OCI-LY7 (cell line): ENCODE measurements at regions of chr7 and their contacts with region 1.

Region 1: DNA sequence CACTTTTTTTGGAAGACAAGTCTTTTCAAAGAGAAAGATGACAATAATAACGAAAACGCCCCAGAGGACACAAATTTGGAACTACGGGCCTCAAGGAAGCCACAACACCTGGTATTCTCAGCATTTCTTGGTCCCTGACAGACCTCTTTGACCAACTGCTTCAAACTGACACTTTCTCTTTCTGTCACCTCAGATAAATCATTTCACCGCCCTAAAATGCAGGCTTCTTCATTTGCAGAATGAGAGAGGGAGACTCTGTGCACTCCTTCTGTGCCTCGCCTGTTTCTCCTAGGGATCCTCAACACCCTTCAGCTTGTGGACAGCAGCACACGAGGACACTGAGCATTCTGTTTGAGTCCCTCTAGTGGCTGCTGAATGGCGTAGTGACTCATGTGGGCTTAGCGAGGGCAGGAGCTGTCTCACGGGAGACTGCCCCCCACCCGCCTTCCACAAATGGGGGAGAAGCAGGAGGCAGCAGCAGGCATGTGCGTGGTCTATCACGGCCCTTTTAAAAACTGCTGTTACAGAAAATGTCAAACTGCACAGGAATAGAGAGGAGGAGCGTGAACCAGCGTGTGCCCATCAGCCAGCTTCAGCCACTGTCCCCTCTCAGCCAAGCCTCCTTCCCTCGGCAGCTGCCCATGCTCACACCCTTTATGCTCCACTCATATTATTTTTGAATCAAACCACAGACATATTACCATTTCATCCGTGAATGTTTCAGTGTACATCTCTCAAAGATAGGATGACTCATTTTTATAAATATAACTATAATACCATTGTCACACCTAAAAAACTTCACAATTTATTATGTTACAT is 41.4 kb downstream of the GSDME start:
- DNase-seq: peak; percentile 90
- H3K4me3 ChIP-seq: peak overlapping the region; percentile 53
- H3K27ac ChIP-seq: peak overlapping the region; percentile 93
- H3K4me1 ChIP-seq: peaks cover 75% of the 10 kb centered on the region
- CTCF ChIP-seq: peak; percentile 69

Region 2: GRCh38 chr7:24325708-24326107 is 390.2 kb before region 1 on chr7:
- CTCF ChIA-PET with region 1: no interaction called
- POLR2A ChIA-PET with region 1: no interaction called
- intact Hi-C with region 1: loop called (anchors 5 kb)
- DNase-seq: peak; percentile 93
- H3K4me3 ChIP-seq: peak overlapping the region; percentile 42
- H3K27ac ChIP-seq: peak overlapping the region; percentile 89
- H3K4me1 ChIP-seq: peaks cover 81% of the 10 kb centered on the region
- CTCF ChIP-seq: no peak

Region 3: DNA sequence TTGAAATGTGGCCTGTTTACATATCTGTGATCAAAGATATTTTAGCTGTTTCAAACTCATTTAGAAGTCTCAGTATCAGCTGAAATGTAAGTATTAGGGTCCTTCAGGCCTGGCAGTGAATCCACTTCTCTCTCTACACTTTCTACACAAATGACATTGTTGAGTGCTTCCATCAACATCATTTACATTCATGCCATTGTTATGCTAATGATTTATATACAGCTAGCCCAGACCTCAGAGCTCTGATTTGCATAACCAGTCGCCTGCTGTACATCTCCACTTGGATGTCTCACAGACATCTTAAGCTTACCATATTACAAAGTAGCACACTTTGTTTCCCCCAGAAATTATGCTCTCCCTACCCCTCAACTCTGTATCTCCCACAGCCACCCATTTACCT is 30.2 kb before region 1 on chr7:
- CTCF ChIA-PET with region 1: no interaction called
- POLR2A ChIA-PET with region 1: no interaction called
- intact Hi-C with region 1: no loop called
- DNase-seq: no peak
- H3K4me3 ChIP-seq: no peak overlapping the region
- H3K27ac ChIP-seq: no peak overlapping the region
- H3K4me1 ChIP-seq: no peaks in the 10 kb centered on the region
- CTCF ChIP-seq: no peak

Region 4: DNA sequence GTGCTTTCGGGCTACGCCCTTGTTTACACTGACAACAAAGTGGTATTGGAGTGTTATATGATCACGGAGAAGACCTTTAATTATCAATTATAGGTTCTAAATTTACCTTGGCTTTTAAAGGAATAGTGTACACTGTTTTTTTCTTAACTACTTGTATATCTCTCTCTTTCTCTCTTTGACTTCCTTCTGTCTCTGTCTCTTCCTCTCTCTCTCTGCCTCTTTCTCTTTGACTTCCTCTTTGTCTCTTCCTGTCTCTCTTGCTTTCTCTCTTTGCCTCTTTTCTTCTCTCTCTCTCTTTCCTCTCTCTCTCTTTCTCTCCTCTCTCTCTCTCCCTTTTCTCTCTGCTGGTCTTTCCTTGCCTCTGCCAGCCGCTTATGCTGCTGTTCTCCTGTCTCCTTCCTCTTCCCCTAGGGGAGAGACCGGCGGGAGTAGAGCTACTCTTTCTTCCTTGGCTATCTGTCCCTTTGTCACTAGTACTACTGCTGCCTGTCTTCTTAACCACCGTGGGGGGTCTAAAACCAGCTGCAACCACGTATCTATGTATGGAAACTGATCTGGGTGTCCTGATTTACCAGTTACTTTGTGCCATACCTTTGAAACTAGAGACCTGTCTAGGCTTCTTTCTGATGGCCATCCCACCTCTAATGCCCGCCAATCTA is 78.2 kb after region 1 on chr7:
- CTCF ChIA-PET with region 1: no interaction called
- POLR2A ChIA-PET with region 1: no interaction called
- intact Hi-C with region 1: loop called (anchors 5 kb)
- DNase-seq: peak; percentile 39
- H3K4me3 ChIP-seq: peak overlapping the region; percentile 7
- H3K27ac ChIP-seq: peak overlapping the region; percentile 13
- H3K4me1 ChIP-seq: peaks cover 19% of the 10 kb centered on the region
- CTCF ChIP-seq: no peak

Region 5: DNA sequence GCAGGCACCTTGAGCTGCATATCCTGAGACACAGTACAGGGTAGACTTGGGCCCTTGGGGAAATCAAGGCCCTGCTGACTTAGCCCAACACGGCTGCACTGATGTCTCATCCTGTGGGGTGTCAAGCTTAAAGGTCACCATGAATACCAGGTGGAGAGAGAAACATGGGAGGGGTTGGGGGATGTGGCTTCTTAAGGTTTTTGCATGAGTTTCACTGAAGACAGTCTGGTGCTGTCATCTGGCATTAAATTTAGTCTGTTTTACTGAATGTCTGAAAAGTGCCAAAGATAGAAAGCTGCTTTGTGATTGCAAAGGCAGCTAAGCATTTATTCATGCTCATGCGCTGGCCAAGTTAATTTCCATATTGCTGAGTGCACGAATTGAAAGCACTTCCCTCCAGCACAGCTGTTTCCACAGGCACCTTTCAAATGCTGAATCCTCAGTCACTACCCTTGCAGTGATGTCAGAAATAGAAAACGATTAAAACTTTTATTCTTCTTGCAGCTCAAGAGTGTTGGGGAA is 162.0 kb after region 1 on chr7:
- CTCF ChIA-PET with region 1: no interaction called
- POLR2A ChIA-PET with region 1: interaction called, 7 read pairs
- intact Hi-C with region 1: loop called (anchors 5 kb)
- DNase-seq: peak; percentile 94
- H3K4me3 ChIP-seq: peak overlapping the region; percentile 51
- H3K27ac ChIP-seq: peak overlapping the region; percentile 93
- H3K4me1 ChIP-seq: peaks cover 98% of the 10 kb centered on the region
- CTCF ChIP-seq: no peak